ENCODE measurements at regions of chr20 and their contacts with region 1.

Region 1: GRCh38 chr20:10591956-10592521 is 81.8 kb downstream of the JAG1 start:
- DNase-seq: no peak
- H3K4me3 ChIP-seq: no peak overlapping the region
- H3K27ac ChIP-seq: no peak overlapping the region
- H3K4me1 ChIP-seq: no peaks in the 10 kb centered on the region
- H3K27me3 ChIP-seq: no peaks in the 10 kb centered on the region
- CTCF ChIP-seq: no peak
- EP300 ChIP-seq: no peak
- POLR2A ChIP-seq: no peak
- RAD21 ChIP-seq: no peak

Region 2: DNA sequence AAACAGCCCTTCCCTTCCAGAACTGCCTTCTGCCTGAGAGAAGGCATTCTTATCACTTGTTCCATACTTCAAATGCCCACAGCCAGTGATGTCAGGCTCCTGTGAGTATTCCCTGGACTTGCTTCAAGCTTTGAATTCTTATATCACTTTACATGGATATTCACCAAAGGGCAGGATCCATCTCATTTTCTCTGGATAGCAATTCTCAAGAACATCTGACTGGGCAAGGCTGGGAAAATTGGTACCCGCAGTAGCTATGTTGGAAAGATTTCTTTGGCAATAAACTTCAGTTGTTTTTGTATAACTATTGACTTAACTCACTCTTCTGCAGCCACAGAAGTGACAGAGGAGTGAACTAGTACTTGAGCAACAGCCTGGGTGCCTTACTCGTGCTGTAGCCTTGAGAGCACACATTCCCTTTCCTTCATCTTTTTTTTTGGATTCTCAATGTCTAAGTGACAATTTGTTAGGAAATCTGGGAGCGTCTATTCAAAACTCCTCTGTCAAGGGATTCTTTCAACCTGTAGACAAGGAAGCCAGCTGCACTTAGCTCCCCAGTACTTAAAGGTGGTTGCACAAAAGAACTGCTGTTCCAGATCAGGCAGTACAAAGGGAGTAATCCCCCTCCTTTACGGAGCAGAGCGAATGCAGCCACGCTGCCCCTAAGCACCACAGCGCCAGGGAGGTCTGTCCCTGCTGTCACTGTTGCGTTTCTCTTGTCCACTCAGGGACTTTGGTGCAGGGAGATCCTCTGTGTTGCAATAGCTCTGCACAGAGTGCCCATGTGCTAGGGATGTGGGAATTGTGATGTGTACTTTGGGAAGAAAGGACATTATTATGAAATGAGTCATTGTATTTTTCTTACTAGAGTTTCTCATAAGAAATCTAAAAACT is 12.2 kb after region 1 on chr20:
- CTCF ChIA-PET with region 1: interaction called, 12 read pairs
- POLR2A ChIA-PET with region 1: no interaction called
- DNase-seq: no peak
- H3K4me3 ChIP-seq: no peak overlapping the region
- H3K27ac ChIP-seq: no peak overlapping the region
- H3K4me1 ChIP-seq: peaks cover 0 to 1% (median 0%) of the 10 kb centered on the region in 4 experiments; a peak in 1 of 7 replicates
- H3K27me3 ChIP-seq: no peaks in the 10 kb centered on the region
- CTCF ChIP-seq: no peak
- EP300 ChIP-seq: no peak
- POLR2A ChIP-seq: no peak
- RAD21 ChIP-seq: no peak